ENCODE measurements at regions of chr19 and their contacts with region 1.

Region 1: DNA sequence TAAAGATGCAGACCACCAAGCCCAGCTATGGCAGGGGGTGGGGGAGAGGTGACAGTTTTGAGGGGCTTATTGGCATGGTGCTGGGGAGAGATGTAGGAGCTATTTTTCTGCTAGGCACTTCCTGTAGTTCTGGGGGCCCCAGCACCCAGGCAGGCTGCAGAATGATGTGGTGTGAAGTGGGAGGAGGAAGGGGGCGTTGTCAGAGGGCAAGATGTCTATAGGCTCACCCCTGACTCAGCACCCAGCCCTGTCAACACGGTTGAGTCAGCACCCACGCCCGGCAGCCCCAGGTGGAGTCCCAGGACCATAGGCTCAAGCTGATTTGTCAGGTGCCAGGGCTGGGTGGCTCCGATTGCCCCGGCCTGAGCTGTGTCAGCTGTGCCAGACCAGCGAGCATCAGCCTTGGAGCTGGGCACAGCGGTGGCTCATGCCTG is 5.8 kb downstream of the KLF2 start:
- DNase-seq: peak; percentile 70
- ATAC-seq: peak; percentile 77
- H3K4me3 Mint-ChIP-seq: peak overlapping the region; percentile 42
- H3K27ac Mint-ChIP-seq: peak overlapping the region; percentile 94
- H3K4me1 Mint-ChIP-seq: peaks cover 63% of the 10 kb centered on the region
- H3K27me3 Mint-ChIP-seq: no peaks in the 10 kb centered on the region
- CTCF ChIP-seq: no peak

Region 2: DNA sequence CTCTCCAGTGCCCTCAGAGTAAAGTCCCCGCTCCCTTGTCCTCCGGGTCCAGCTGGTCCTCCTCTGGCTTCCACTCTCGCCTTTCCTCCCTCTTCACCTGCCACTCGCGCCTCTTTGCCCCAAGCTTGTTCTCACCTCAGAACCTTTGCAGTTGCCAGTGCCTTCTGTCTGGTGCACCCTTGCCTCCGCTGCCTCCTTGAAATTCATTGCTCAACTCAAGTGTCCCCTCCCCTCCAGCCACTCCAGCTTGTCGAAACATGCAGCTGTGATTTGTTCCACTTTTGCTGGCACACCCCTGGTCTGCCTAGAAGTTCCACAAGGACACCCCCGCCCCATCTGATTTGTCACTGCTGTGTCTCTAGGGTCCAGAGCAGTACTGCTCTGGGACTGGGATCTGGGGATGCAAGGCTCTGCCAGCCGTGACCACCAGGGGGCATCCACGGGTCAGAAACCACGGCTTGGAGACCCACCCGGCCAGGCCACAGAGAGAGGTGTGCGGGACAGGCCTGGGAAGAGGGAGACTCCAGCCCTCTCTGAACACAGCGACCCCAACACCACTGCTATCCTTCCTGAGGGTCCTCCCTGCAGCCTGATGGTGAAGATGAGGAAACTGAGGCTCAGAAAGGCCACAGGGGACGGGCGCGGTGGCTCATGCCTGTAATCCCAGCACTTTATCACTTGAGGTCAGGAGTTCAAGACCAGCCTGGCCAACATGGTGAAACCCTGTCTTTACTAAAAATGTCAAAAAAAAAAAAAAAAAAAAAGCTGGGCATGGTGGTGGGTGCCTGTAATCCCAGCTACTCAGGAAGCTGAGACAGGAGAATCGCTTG is 82.8 kb before region 1 on chr19:
- CTCF ChIA-PET with region 1: interaction called, 41 read pairs
- POLR2A ChIA-PET with region 1: interaction called, 69 read pairs
- intact Hi-C with region 1: no loop called
- DNase-seq: peak; percentile 85
- ATAC-seq: peak; percentile 88
- H3K4me3 Mint-ChIP-seq: peak overlapping the region; percentile 17
- H3K27ac Mint-ChIP-seq: peak overlapping the region; percentile 32
- H3K4me1 Mint-ChIP-seq: peaks cover 41% of the 10 kb centered on the region
- H3K27me3 Mint-ChIP-seq: no peaks in the 10 kb centered on the region
- CTCF ChIP-seq: peak; percentile 33

Region 3: GRCh38 chr19:16301999-16302694 is 28.2 kb before region 1 on chr19:
- CTCF ChIA-PET with region 1: interaction called, 4 read pairs
- POLR2A ChIA-PET with region 1: interaction called, 16 read pairs
- intact Hi-C with region 1: no loop called
- DNase-seq: peak; percentile 43
- ATAC-seq: peak; percentile 81
- H3K4me3 Mint-ChIP-seq: peak overlapping the region; percentile 50
- H3K27ac Mint-ChIP-seq: peak overlapping the region; percentile 88
- H3K4me1 Mint-ChIP-seq: peaks cover 22% of the 10 kb centered on the region
- H3K27me3 Mint-ChIP-seq: no peaks in the 10 kb centered on the region
- CTCF ChIP-seq: no peak

Region 4: DNA sequence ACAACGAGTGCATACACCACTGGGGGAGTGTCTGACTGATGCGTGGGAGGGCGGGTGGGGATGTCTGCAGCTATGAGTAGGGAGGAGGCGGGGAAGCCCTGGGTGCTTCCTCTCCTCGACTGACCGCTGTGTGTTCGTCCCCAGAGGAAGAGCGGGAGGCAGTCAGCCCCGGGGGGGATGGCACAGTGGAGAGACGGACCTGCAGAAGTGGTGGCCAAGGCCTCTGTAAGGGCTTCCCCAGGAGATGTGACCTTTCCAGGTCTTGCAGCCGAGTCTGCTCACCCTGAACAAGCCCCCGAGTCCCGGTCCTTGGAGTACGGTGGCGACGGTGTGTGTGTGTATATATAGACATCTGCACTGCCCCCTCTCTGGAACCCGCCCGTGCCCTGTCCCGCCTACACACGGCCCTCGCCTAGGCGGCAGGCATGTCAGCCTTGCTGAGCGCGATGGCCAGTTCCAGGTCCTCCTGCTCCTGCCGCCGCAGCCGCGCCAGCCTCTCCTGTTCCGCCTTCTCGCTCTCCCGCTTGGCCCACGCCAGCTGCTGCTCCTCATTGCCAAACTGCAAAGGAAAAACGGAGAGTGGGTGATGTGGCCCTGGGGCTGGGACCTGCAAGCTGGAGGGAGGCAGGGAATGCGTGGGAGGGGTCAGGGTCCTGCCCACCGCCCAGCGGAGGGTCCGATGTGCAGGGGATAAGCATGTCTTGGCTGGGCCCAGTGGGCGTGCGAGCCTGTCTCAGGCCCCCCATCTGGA is 25.1 kb after region 1 on chr19:
- CTCF ChIA-PET with region 1: interaction called, 4 read pairs
- POLR2A ChIA-PET with region 1: interaction called, 828 read pairs
- intact Hi-C with region 1: no loop called
- DNase-seq: no peak
- ATAC-seq: peak; percentile 63
- H3K4me3 Mint-ChIP-seq: peak overlapping the region; percentile 66
- H3K27ac Mint-ChIP-seq: no peak overlapping the region
- H3K4me1 Mint-ChIP-seq: peaks cover 83% of the 10 kb centered on the region
- H3K27me3 Mint-ChIP-seq: no peaks in the 10 kb centered on the region
- CTCF ChIP-seq: no peak

Region 5: GRCh38 chr19:16382775-16383543 is 52.6 kb after region 1 on chr19:
- CTCF ChIA-PET with region 1: interaction called, 32 read pairs
- POLR2A ChIA-PET with region 1: interaction called, 223 read pairs
- intact Hi-C with region 1: loop called (anchors 1 kb)
- DNase-seq: peak; percentile 63
- ATAC-seq: peak; percentile 59
- H3K4me3 Mint-ChIP-seq: peak overlapping the region; percentile 57
- H3K27ac Mint-ChIP-seq: peak overlapping the region; percentile 94
- H3K4me1 Mint-ChIP-seq: peaks cover 82% of the 10 kb centered on the region
- H3K27me3 Mint-ChIP-seq: no peaks in the 10 kb centered on the region
- CTCF ChIP-seq: no peak